ENCODE measurements at regions of chr6 and their contacts with region 1.

Region 1: GRCh38 chr6:39608652-39609345 is 116.4 kb downstream of the KIF6 start:
- DNase-seq: no peak
- H3K4me3 ChIP-seq: no peak overlapping the region
- H3K27ac ChIP-seq: no peak overlapping the region
- H3K4me1 ChIP-seq: no peaks in the 10 kb centered on the region
- H3K27me3 ChIP-seq: no peaks in the 10 kb centered on the region
- CTCF ChIP-seq: no peak
- POLR2A ChIP-seq: no peak

Region 2: GRCh38 chr6:39638126-39638822 is 29.5 kb after region 1 on chr6:
- CTCF ChIA-PET with region 1: no interaction called
- POLR2A ChIA-PET with region 1: no interaction called
- dilution Hi-C with region 1: no loop called
- intact Hi-C with region 1: loop called (anchors 1 kb)
- DNase-seq: no peak
- H3K4me3 ChIP-seq: no peak overlapping the region
- H3K27ac ChIP-seq: no peak overlapping the region
- H3K4me1 ChIP-seq: no peaks in the 10 kb centered on the region
- H3K27me3 ChIP-seq: no peaks in the 10 kb centered on the region
- CTCF ChIP-seq: no peak
- POLR2A ChIP-seq: no peak

Measured in endothelial cell of umbilical vein (primary cell).